Posterior vena cava (tissue), 2 donors: ENCODE measurements at regions of chr19 and their contacts with region 1.

Region 1: GRCh38 chr19:7799640-7800355 is 30.2 kb upstream of the EVI5L start:
- DNase-seq: peak; percentile 83

Region 2: GRCh38 chr19:7565332-7565731 is 234.5 kb before region 1 on chr19:
- intact Hi-C with region 1: loop called in 1 of 2 experiments (anchors 5 kb)
- DNase-seq: no peak

Region 3: GRCh38 chr19:7652061-7652641 is 147.6 kb before region 1 on chr19:
- intact Hi-C with region 1: loop called in 1 of 2 experiments (anchors 5 kb)
- DNase-seq: peak; percentile 96

Region 4: DNA sequence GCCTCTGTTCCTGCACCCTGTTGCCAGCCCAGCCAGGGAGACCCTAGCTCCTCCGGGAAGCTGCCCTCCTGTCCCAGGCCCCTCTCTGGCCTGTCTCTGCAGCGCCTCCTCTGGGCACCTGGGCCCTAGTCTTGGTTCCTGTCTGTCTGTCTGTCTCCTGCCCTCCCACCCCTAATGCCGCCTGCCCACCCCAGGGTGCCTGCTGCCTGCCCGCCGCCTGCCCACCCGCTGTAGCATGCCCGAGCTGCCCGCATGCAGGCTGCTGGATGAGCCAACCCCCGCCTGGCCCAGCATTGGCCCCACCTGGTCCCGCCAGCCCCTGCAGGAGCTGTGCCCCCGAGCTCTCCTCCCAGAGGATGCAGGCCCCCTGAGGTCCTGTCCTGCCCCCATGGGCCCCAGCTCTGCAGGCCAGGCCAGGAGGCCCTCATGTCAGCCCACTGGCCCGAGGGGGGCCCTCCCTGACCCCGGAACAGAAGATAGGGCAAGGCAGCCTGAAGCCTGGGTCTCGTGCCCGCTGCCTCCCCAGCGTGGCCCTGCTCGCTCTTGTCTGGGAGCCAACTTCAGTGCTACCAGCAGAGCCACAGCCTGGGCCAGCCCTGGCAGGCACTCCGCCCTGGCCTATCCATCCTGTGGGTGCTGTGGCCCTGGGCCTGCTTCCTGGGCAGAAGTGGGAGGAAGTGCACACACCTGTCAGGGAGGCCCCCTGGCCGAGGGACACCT is 109.1 kb after region 1 on chr19:
- intact Hi-C with region 1: no loop called
- DNase-seq: no peak

Region 5: GRCh38 chr19:7943444-7944176 is 143.8 kb after region 1 on chr19 and contains the start of gene TIMM44:
- intact Hi-C with region 1: no loop called
- DNase-seq: peak; percentile 100
- total RNA-seq, gene TIMM44: 37.2 to 47.8 TPM

Region 6: DNA sequence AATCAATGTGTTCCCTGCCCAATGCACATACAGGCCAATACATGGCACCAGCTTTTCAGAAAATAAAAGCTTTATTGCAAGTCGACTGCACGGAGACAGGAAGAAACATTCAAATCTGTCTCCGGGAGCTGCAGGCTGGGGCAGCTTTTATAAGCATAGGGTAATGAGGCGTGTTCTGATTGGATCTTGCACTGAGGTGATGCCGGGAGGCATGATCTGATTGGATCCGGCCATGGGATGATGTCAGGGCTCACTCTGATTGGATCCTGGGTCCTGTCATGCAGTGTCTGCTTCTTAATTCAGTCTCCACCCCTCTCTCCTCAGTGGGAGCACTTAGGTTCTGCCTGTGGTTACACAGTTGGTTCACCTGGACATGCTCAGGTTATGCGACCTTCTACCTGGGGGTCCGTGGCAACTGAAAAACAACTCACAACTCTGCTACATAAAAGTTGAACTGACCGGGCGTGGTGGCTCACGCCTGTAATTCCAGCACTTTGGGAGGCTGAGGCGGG is 361.4 kb after region 1 on chr19:
- intact Hi-C with region 1: no loop called
- DNase-seq: no peak